ENCODE measurements at regions of chr18 and their contacts with region 1.

Region 1: DNA sequence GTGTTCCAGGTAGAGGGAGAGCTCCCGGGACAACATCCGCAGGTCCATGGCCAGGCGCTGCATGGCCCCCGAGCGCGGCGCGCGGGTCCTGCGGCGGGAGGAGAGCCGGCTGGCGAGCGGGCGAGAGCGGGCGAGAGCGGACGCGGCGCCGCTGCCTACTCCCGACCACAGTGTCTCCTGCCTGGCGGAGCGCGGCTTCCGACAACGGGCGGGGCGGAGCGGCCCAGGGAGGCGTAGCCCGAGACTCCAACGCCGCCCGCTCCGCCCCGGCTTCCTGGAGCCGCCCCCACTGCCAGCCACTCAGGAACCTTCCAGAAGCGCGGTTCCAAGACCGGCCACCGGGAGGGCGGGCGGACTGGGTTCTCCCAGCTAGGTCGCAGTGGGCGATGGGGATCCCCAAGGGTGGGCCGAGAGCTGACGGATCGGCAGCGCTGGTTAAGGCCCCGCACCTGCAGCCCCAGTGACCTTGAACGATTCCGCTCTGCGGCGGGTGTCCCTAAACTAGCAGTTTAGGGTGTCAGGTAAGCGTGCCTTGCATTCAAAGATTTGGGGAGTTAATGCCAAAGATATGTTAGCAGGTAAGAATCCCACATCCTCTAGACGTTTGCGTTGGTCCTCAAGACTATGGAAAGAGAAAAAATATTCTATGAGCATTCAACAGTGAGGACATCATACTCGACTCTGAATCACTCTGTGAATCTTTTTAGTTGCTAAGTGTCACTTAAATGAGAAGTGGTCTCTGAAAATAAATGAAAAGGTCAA is at the start of gene ABHD3:
- DNase-seq: peak; percentile 93
- ATAC-seq: peak; percentile 97
- H3K4me3 ChIP-seq: peak within 1 kb of the TSS; percentile 99
- H3K27ac ChIP-seq: peak within 1 kb of the TSS; percentile 9
- H3K4me1 ChIP-seq: peaks cover 18% of the 10 kb centered on the region; the same call in 1 of the 2 replicates
- H3K27me3 ChIP-seq: no peaks in the 10 kb centered on the region
- CTCF ChIP-seq: no peak
- total RNA-seq, gene ABHD3: 17.9 and 21.4 TPM in 2 replicates

Region 2: DNA sequence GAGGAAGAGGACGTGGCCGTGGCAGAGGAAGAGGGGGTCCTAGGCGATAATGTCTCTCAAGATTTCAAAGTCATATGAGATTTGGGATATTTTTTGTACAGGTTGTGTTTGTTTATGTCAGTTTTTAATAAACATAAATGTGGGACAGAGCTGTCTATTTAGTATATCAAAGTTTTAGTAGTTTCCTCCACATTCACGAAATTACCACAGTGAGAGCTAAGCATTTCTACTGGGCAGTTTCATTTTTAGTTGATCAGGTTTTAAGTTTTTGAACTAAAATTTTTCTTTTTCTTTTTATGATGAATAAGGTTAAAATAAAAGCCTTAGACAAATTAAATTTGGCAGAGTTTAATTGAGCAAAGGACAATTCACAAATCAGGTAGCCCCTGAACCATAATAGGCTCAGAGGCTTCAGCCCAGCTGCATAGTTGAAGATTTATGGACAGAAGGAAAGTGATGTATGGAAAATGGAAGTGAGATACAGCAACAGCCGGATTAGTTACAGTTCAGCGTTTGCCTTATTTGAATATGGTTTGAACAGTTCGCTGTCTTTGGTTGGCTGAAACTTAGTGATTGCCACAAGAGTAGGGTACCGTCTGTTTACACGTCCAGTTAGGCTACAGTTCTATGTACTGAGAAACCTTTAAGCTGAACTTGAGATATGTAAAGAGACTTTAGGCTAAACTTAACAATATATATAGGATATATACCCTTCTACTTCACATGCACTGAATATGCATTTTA is 75.5 kb before region 1 on chr18:
- CTCF ChIA-PET with region 1: no interaction called
- POLR2A ChIA-PET with region 1: no interaction called
- intact Hi-C with region 1: loop called (anchors 2 kb)
- DNase-seq: no peak
- ATAC-seq: no peak
- H3K4me3 ChIP-seq: no peak overlapping the region
- H3K27ac ChIP-seq: no peak overlapping the region
- H3K4me1 ChIP-seq: no peaks in the 10 kb centered on the region
- H3K27me3 ChIP-seq: no peaks in the 10 kb centered on the region
- CTCF ChIP-seq: no peak

Region 3: GRCh38 chr18:21636769-21637168 is 68.0 kb before region 1 on chr18:
- CTCF ChIA-PET with region 1: no interaction called
- POLR2A ChIA-PET with region 1: no interaction called
- intact Hi-C with region 1: loop called (anchors 1 kb)
- DNase-seq: peak; percentile 55
- ATAC-seq: peak; percentile 6; the same call in 1 of the 2 replicates
- H3K4me3 ChIP-seq: no peak overlapping the region
- H3K27ac ChIP-seq: peak overlapping the region; percentile 86
- H3K4me1 ChIP-seq: peaks cover 35% of the 10 kb centered on the region
- H3K27me3 ChIP-seq: no peaks in the 10 kb centered on the region
- CTCF ChIP-seq: no peak

Region 4: DNA sequence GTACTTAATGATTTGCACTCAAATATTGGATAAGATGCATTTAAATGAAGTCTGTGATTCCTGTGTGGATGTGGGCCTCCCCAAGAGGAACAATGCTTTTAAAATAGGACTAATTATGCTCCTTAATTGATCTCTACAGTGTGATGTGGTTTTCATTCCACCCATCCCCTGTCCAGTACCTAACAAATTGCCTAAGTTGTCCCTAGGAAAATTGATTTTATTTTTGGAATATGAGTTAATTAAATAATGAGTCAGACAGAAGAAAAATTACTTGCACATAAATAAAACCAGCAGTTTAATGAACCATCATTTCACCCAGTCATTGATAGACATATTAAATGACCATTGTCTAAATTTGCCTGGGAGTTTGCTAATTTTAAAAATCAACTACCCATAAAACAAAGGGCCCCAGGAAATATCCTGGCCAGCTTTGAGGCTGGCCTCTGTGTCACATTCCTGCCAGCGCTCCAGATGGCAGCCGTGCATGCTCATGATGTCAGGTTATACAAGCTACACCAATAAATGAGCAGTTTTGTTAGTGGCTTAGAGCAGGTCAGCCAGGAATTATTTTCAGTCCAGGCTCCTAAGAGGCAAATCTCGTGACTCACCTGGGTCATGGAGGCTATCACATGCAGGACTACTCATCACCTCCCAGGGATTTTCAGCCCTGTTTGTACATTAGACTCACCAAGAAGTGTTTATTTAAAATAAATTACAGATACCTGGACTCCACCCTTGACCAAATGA is 32.1 kb before region 1 on chr18:
- CTCF ChIA-PET with region 1: interaction called, 3 read pairs
- POLR2A ChIA-PET with region 1: no interaction called
- intact Hi-C with region 1: loop called (anchors 5 kb)
- DNase-seq: peak; percentile 87
- ATAC-seq: peak; percentile 64
- H3K4me3 ChIP-seq: no peak overlapping the region
- H3K27ac ChIP-seq: peak overlapping the region; percentile 89
- H3K4me1 ChIP-seq: peaks cover 60% of the 10 kb centered on the region
- H3K27me3 ChIP-seq: no peaks in the 10 kb centered on the region
- CTCF ChIP-seq: 0 out of 2 replicates have a peak, but pooled peaks have one; percentile 8

Region 5: GRCh38 chr18:21740724-21741510 is 36.1 kb after region 1 on chr18 and contains the start of gene MIB1:
- CTCF ChIA-PET with region 1: interaction called, 7 read pairs
- POLR2A ChIA-PET with region 1: interaction called, 10 read pairs
- intact Hi-C with region 1: loop called (anchors 2 kb)
- DNase-seq: no peak
- ATAC-seq: peak; percentile 66
- H3K4me3 ChIP-seq: peak within 1 kb of the TSS; percentile 88
- H3K27ac ChIP-seq: peak within 1 kb of the TSS; percentile 85
- H3K4me1 ChIP-seq: peaks cover 27% of the 10 kb centered on the region
- H3K27me3 ChIP-seq: no peaks in the 10 kb centered on the region
- CTCF ChIP-seq: no peak
- total RNA-seq, gene MIB1: 25.1 and 26.3 TPM in 2 replicates

Region 6: DNA sequence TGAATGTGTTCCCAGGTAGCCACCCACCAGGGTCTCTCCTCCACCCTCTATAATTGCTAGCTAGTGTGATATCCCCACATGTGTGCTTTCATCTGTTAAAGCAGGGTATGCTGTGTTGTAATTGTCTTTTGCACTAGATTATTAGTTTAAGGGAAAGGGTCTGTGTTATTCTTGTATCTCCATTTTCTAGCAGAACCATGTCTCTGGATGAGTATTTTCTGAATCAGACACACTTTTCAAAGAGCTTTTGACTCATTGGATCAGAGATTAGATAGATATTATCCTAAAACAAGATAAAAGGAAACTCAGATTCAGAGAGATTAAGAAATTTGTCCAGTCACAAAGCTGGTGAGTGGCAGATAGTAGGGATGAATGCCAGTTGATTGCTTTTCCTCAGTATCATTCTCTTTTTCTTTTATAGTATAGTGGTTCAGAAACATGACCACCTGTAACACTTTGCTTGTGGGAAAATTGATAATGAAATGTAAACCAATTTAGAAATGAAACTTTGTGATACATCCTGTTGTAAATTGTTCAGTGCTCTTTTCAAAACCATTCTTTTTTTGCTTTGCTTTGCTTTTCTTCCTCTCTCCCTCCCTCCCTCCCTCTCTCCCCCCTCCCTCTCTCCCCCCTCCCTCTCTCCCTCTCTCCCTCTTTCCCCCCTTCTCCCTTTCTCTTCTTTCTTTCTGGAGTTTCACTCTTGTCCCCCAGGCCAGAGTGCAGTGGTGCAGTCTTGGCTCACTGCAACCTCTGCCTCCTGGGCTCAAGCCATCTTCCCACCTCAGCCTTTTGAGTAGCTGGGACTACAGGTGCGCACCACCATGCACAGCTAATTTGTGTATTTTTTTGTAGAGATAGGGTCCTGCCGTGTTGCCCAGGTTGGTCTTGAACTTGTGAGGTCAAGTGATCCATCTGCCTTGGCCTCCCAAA is 43.2 kb after region 1 on chr18:
- CTCF ChIA-PET with region 1: no interaction called
- POLR2A ChIA-PET with region 1: interaction called, 24 read pairs
- intact Hi-C with region 1: no loop called
- DNase-seq: no peak
- ATAC-seq: no peak
- H3K4me3 ChIP-seq: no peak overlapping the region
- H3K27ac ChIP-seq: no peak overlapping the region
- H3K4me1 ChIP-seq: peaks cover 9% of the 10 kb centered on the region
- H3K27me3 ChIP-seq: no peaks in the 10 kb centered on the region
- CTCF ChIP-seq: no peak

Region 7: GRCh38 chr18:21933931-21934765 is 229.4 kb after region 1 on chr18:
- CTCF ChIA-PET with region 1: no interaction called
- POLR2A ChIA-PET with region 1: no interaction called
- intact Hi-C with region 1: no loop called
- DNase-seq: no peak
- ATAC-seq: no peak
- H3K4me3 ChIP-seq: no peak overlapping the region
- H3K27ac ChIP-seq: no peak overlapping the region
- H3K4me1 ChIP-seq: no peaks in the 10 kb centered on the region
- H3K27me3 ChIP-seq: no peaks in the 10 kb centered on the region
- CTCF ChIP-seq: no peak